ENCODE measurements at regions of chr1 and their contacts with region 1.

Region 1: GRCh38 chr1:246753670-246754535 is 29.7 kb downstream of the SCCPDH start:
- DNase-seq: peak; percentile 43 to 67
- ATAC-seq: peak; percentile 79

Region 2: GRCh38 chr1:246497331-246497915 is 256.5 kb before region 1 on chr1:
- intact Hi-C with region 1: loop called in 1 of 2 experiments (anchors 10 kb)
- DNase-seq: no peak
- ATAC-seq: peak; percentile 52

Region 3: DNA sequence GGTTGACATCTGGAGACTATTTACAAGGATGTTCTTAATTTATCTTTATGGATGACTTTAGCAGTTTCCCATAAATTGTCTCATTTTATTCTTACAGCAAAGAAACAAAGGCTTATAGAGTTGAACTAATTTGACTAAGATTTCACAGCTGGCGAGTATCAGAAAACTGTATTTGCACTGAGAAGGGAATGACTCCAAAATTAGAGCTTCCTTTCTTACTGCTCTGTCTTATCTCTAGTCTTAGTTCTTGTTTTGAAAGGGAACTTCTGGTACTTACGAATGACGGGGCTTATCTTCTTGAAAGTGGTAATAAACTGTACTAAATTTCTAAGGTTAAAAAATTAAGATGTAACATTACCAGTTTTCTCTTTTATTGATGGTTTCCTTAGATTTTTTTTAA is 174.1 kb before region 1 on chr1:
- intact Hi-C with region 1: no loop called
- DNase-seq: no peak
- ATAC-seq: no peak

Measured in left colon (tissue), 2 donors.